ENCODE measurements at regions of chr17 and their contacts with region 1.

Region 1: GRCh38 chr17:40303009-40303657 is 5.8 kb upstream of the RARA start:
- DNase-seq: peak in 1 of 2 donors; percentile 74
- H3K4me3 ChIP-seq: no peak overlapping the region
- CTCF ChIP-seq: peak in 2 of 3 donors; percentile 0 to 57
- POLR2A ChIP-seq: no peak

Region 2: GRCh38 chr17:40355123-40355803 is 52.1 kb after region 1 on chr17:
- intact Hi-C with region 1: loop called (anchors 2 kb)
- DNase-seq: no peak
- H3K4me3 ChIP-seq: no peak overlapping the region
- CTCF ChIP-seq: peak in 1 of 3 donors; percentile 88
- POLR2A ChIP-seq: no peak

Region 3: DNA sequence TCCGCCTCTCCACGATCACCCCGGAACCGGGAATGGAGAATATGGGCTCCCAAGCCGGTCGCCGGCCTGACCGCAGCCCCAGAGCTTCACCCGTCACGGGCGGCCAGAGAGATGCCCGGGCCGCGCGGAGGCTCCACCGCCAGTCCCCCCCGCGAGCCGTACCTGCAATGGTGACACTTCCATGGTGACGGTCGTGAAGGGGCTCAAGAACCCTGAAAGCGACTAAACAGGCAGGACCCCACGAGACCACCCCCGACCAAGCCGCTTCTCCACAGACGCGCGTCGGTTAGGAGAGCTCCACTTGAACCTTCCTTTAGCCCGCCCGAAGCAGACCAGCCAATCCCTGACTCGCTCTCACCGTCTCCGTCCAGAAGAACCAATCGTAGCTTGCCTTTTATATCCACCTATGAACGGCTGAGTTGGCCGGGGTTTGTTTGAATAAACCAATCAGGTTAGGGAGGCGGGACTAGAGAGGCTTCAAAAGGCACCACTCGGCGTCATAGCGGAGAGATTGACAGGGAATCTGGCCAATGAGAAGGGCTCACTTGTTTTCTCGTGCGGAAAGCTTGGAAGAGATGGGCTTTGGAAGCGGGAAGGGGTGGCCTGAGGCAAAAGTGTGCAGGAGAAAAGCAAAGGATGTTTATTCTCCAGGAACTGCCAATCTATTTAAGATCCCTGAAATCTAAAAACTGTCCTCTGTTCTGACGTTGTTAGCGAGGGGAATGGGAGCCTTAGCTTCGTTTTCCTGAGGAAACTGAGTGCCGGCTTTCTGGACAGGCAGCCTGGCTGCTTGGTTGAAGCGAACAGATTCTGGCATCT is 114.7 kb after region 1 on chr17 and contains the start of gene TOP2A:
- intact Hi-C with region 1: loop called (anchors 10 kb)
- DNase-seq: peak; percentile 99 to 100
- H3K4me3 ChIP-seq: peak within 1 kb of the TSS; percentile 30
- CTCF ChIP-seq: no peak
- POLR2A ChIP-seq: no peak
- total RNA-seq, gene TOP2A: 5.7 to 11.9 (median 8.2) TPM

Region 4: DNA sequence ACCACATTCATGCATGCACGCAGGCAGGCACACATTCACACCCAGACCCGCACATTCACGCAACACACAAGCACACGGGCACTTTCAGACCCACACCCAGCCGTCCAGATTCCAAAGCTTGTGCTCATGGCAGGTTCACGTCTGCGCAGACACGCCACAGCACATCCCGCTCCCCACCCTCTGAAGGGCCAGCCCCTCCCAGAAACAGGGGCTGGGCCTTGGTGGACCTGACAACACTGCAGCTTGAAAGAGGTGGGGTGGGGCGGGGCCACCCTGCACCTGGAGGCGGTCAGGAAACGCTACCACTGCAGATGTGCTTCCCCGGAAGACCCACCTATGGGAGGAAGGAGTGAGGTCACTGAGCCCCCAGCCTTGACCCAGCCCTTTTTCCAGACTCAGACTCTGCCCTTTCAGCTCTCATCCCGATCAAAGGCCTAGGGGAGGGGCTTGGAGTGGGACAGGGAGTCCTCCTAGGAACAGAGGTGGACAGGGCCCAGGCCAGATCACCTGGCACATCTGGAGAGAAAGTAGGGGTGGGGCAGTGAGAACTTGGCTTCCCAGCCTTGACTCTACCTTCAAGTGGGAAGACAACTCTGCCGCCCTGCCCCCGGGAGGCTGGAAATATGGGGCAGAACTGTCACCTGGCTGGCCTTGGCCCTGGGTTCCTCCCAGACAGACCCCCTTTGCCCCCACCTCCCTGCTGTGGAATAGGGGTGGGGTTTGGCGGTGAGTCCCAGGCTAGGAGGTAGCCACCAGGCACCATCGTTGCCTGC is 1497.7 kb after region 1 on chr17:
- intact Hi-C with region 1: no loop called
- DNase-seq: peak; percentile 79 to 93
- H3K4me3 ChIP-seq: no peak overlapping the region
- CTCF ChIP-seq: no peak
- POLR2A ChIP-seq: no peak

Measured in lower leg skin (tissue), 4 donors.